ENCODE measurements at regions of chr15 and their contacts with region 1.

Region 1: GRCh38 chr15:64749999-64750657 is 25.3 kb downstream of the RBPMS2 start:
- DNase-seq: no peak
- H3K4me3 ChIP-seq: peak overlapping the region in 2 of 4 donors; percentile 8 to 15
- H3K27ac ChIP-seq: peak overlapping the region; percentile 80 to 90 (median 86)
- H3K4me1 ChIP-seq: peaks cover 0 to 94% (median 82%) of the 10 kb centered on the region in 4 donors
- H3K27me3 ChIP-seq: no peaks in the 10 kb centered on the region
- CTCF ChIP-seq: no peak
- EP300 ChIP-seq: peak in 1 of 4 donors; percentile 61
- POLR2A ChIP-seq: no peak

Region 2: GRCh38 chr15:64209680-64210334 is 540.3 kb before region 1 on chr15:
- intact Hi-C with region 1: no loop called
- DNase-seq: no peak
- H3K4me3 ChIP-seq: no peak overlapping the region
- H3K27ac ChIP-seq: no peak overlapping the region
- H3K4me1 ChIP-seq: no peaks in the 10 kb centered on the region
- H3K27me3 ChIP-seq: no peaks in the 10 kb centered on the region
- CTCF ChIP-seq: peak; percentile 10 to 35 (median 33)
- EP300 ChIP-seq: no peak
- POLR2A ChIP-seq: no peak

Region 3: DNA sequence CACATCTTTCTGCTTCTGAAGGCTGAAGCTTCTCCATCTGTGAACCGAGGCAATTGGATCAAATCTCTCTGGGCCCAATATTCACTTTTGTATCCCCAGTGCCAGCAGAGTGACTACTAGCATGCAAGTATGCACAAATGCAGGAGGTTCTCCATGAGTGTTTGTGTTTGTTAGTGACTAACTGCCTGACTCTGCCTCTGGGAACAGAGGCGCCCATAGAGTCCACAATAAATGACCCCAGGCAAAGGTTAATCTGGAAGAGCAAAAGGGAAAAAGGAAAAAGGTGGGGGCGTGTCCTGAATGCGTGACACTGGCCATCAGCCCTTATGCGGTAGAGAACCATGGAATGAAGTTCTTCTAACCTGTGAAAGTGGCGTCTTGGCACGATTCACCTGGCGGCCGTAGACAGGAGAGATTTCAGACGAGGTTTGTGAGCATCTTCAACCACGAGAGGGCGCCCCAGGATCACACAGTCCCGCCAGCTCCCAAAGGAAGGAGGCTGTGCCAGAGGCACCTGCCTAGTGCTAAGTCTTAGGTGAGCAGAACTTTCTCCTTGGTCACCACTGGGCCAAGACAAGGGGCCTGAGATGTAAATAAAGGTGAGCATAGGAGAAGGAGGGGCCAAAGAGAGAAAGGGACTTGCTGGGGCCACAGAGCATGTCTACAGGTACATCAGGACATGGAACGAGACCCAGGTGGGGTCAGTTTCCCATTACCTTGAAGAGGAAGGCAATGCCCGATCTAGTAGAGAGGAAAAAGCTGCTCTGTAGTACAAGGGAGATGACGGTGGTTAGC is 18.9 kb before region 1 on chr15:
- intact Hi-C with region 1: no loop called
- DNase-seq: peak; percentile 93
- H3K4me3 ChIP-seq: no peak overlapping the region
- H3K27ac ChIP-seq: peak overlapping the region; percentile 45 to 64 (median 56)
- H3K4me1 ChIP-seq: peaks cover 0 to 19% (median 14%) of the 10 kb centered on the region in 4 donors
- H3K27me3 ChIP-seq: no peaks in the 10 kb centered on the region
- CTCF ChIP-seq: peak; percentile 87 to 93 (median 92)
- EP300 ChIP-seq: no peak
- POLR2A ChIP-seq: no peak

Region 4: DNA sequence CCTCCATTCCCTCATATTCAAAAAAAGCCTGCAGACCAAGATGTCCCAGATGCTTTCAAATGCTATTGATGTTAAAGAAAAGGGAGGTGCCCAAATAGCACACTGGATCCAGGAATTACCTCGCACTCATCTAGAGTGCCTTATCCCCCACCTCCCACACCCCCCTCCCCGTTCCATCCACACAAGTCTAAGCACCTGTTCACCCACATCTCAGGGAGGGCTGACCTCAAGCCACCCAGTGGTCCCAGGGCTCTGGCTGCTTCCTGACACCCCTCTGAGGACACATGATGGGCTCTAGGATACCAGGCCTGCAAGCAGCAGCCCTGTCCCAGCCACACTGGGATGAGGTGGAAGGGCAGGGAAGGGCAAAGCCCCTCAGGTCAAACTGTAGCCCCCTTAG is 20.5 kb after region 1 on chr15:
- intact Hi-C with region 1: loop called (anchors 1 kb)
- DNase-seq: no peak
- H3K4me3 ChIP-seq: no peak overlapping the region
- H3K27ac ChIP-seq: peak overlapping the region; percentile 22 to 99 (median 96)
- H3K4me1 ChIP-seq: peaks cover 0 to 64% (median 45%) of the 10 kb centered on the region in 4 donors
- H3K27me3 ChIP-seq: no peaks in the 10 kb centered on the region
- CTCF ChIP-seq: no peak
- EP300 ChIP-seq: no peak
- POLR2A ChIP-seq: no peak